ENCODE measurements at regions of chr22 and their contacts with region 1.

Region 1: GRCh38 chr22:41946629-41947423 is at the start of gene CENPM:
- DNase-seq: peak; percentile 95
- H3K4me3 ChIP-seq: peak within 1 kb of the TSS; percentile 94
- H3K27ac ChIP-seq: peak within 1 kb of the TSS; percentile 75
- H3K4me1 ChIP-seq: peaks cover 74% of the 10 kb centered on the region
- CTCF ChIP-seq: no peak
- total RNA-seq, gene CENPM: 347 and 354 TPM in 2 replicates

Region 2: DNA sequence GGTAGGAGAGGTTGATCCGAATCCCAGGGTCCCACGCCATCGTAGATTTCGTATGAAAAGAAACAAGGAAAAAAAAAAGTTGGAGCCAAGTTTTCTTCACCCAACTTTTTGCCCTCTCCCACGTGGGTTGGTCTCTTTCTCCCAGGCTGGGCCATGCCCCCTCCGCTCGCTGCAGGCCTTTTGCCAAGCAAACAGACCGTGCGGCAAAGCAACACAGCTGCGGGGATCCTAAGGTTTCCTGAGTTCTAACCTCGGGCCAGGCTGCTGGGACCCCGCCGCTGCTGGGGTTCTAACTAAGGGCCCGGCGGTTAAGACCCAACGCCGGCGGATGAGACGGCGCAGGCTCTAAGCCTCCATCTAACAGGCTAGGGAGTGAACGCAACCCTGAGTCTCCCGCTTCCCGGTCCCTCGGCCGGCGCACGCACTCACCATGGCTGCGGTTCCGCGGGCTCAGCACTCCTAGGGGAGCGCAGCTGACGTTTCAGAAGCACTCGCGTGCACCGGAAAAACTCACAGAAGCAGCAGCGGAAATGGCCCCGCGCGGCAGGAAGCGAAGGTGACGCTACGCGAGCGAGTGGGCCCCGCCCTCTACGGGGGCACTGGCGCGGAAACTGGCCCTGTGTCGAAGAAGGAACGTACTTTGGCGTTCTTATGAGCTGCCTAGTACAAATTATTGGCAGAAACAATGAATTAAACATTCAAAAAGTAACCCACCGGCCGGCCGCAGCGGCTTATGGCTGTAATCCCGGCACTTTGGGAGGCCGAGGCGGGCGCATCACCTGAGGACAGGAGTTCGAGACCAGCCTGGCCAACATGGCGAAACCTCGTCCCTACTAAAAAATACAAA is 258.2 kb before region 1 on chr22 and contains the start of gene SNU13:
- CTCF ChIA-PET with region 1: no interaction called
- POLR2A ChIA-PET with region 1: interaction called, 3 read pairs
- intact Hi-C with region 1: loop called (anchors 2 kb)
- DNase-seq: peak; percentile 97
- H3K4me3 ChIP-seq: peak within 1 kb of the TSS; percentile 87
- H3K27ac ChIP-seq: peak within 1 kb of the TSS; percentile 83
- H3K4me1 ChIP-seq: peaks cover 33% of the 10 kb centered on the region
- CTCF ChIP-seq: no peak
- total RNA-seq, gene SNU13: 155 and 199 TPM in 2 replicates

Region 3: DNA sequence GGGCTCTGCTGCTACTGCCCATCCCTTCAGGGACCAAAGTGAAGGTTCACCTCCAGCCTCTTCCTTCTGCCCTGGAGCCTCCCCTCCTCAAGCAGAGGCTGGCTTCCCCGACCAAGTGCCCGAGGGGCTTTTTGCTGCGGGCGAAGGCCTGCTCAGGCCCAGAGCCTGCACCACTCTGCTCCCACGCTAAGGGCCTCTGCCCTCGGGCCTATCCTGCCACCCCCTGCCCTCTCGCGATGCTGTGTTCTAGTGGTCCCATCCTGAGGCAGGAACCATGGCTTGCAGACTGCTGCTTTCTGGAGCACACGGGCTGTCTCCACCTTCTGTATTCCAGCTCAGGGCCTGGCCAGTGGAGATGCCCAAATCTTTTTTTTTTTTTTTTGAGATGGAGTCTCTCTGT is 11.3 kb before region 1 on chr22:
- CTCF ChIA-PET with region 1: interaction called, 4 read pairs
- POLR2A ChIA-PET with region 1: interaction called, 14 read pairs
- intact Hi-C with region 1: no loop called
- DNase-seq: no peak
- H3K4me3 ChIP-seq: peak overlapping the region; percentile 8
- H3K27ac ChIP-seq: peak overlapping the region; percentile 91
- H3K4me1 ChIP-seq: peaks cover 99% of the 10 kb centered on the region
- CTCF ChIP-seq: no peak

Region 4: GRCh38 chr22:42444077-42444904 is 497.5 kb after region 1 on chr22:
- CTCF ChIA-PET with region 1: no interaction called
- POLR2A ChIA-PET with region 1: no interaction called
- intact Hi-C with region 1: loop called (anchors 5 kb)
- DNase-seq: peak; percentile 90
- H3K4me3 ChIP-seq: peak overlapping the region; percentile 65
- H3K27ac ChIP-seq: peak overlapping the region; percentile 70
- H3K4me1 ChIP-seq: peaks cover 64% of the 10 kb centered on the region
- CTCF ChIP-seq: peak; percentile 83